IMR-90 (cell line): ENCODE measurements at regions of chr5 and their contacts with region 1.

Region 1: DNA sequence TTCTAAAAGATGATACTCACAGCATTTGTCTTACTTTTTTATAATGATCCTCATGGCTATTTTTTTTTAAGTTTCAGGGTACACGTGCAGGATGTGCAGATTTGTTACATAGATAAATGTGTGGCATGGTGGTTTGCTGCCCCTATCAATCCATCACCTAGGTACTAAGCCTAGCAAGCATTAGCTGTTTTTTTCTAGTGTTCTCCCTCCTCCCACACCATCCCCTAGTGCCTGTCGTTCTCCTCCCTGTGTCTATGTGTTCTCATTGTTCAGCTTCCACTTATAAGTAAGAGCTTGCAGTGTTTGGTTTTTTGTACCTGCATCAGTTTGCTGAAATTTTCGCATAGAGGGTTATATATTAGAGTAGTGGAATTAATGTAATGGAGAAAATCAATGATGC is 189.1 kb upstream of the CDH12 start:
- DNase-seq: no peak
- ATAC-seq: no peak
- H3K4me3 ChIP-seq: no peak overlapping the region
- H3K27ac ChIP-seq: no peak overlapping the region
- H3K4me1 ChIP-seq: no peaks in the 10 kb centered on the region
- H3K27me3 ChIP-seq: no peaks in the 10 kb centered on the region
- CTCF ChIP-seq: no peak
- POLR2A ChIP-seq: no peak
- RAD21 ChIP-seq: no peak

Region 2: GRCh38 chr5:22728610-22729009 is 313.6 kb before region 1 on chr5:
- CTCF ChIA-PET with region 1: no interaction called
- POLR2A ChIA-PET with region 1: no interaction called
- dilution Hi-C with region 1: no loop called
- in situ Hi-C with region 1: no loop called
- intact Hi-C with region 1: no loop called
- DNase-seq: no peak
- ATAC-seq: no peak
- H3K4me3 ChIP-seq: no peak overlapping the region
- H3K27ac ChIP-seq: no peak overlapping the region
- H3K4me1 ChIP-seq: no peaks in the 10 kb centered on the region
- H3K27me3 ChIP-seq: no peaks in the 10 kb centered on the region
- CTCF ChIP-seq: no peak
- POLR2A ChIP-seq: no peak
- RAD21 ChIP-seq: no peak

Region 3: DNA sequence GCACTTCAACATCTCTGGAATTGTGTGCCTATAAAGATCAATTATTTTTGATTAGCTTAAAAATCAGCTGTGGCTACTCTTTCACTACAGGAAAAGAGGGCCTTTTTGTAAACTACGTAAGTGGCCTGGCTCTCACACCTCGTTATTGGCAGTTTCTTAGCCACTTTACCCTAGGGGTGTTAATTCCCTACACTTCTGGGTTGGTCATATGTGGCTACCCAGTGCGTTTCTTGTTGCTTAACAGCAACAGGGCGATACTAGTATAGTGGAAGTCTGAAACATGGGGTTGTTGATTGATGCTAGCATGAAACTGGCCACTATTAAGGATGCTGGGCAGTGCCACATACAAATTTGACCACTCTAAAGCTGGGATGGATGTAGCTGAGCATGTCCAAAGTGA is 14.4 kb before region 1 on chr5:
- CTCF ChIA-PET with region 1: interaction called, 16 read pairs
- POLR2A ChIA-PET with region 1: no interaction called
- dilution Hi-C with region 1: no loop called
- in situ Hi-C with region 1: no loop called
- intact Hi-C with region 1: no loop called
- DNase-seq: no peak
- ATAC-seq: no peak
- H3K4me3 ChIP-seq: no peak overlapping the region
- H3K27ac ChIP-seq: no peak overlapping the region
- H3K4me1 ChIP-seq: no peaks in the 10 kb centered on the region
- H3K27me3 ChIP-seq: no peaks in the 10 kb centered on the region
- CTCF ChIP-seq: no peak
- POLR2A ChIP-seq: no peak
- RAD21 ChIP-seq: no peak